Activated CD4-positive, alpha-beta memory T cell treated with anti-CD3 and anti-CD28 coated beads, Interleukin-2, amount 10 ng/mL, durations not matched to agents 7 days and 5 days (primary cell): ENCODE measurements at regions of chr21 and their contacts with region 1.

Region 1: DNA sequence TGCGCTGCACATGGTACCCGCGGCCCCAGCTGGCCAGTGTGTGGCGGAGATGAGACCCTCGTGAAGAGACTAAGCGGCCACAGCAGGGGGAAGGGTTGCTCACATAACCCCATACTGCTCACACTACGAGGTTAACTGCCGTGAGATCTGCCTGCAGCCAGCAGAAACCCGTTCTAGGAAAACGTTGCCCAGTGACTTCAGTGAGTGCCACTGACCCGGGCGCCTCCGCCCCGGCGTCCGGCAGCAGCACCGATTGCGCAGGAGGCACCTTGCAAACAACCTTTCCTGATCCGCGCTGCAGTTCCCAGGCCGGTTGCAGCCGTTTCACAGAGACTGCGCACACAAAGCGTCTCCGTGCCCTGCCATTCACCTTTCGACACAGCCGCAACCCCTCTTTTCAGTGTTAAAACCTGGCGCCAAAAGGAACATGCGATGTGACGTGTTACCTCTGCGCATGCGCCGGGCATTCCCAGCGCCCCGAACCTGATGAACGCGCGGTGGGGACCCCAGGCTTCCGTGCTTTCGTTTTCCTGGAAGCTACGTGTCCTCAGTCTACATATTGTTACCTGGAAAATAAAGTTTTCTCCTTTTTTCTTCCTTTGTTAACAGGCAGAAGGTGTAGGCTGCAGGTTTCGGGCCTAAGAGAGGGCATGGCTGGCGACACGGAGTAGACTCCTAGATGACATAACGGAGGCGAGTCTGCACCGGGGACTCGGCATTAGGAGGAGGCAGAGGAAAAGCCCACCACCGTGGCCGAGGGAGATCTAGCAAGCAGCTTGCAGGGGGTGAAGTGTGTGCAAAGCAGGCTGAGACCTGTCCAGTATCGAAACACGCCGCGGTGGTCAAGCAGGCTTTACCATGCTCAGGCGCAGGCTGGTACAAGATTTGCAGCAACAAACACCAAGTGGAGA is 8.9 kb downstream of the VPS26C start:
- DNase-seq: peak; percentile 88
- H3K4me3 Mint-ChIP-seq: peak overlapping the region; percentile 84
- H3K27ac Mint-ChIP-seq: peak overlapping the region; percentile 96
- H3K4me1 Mint-ChIP-seq: peaks cover 45% of the 10 kb centered on the region
- H3K27me3 Mint-ChIP-seq: no peaks in the 10 kb centered on the region

Region 2: DNA sequence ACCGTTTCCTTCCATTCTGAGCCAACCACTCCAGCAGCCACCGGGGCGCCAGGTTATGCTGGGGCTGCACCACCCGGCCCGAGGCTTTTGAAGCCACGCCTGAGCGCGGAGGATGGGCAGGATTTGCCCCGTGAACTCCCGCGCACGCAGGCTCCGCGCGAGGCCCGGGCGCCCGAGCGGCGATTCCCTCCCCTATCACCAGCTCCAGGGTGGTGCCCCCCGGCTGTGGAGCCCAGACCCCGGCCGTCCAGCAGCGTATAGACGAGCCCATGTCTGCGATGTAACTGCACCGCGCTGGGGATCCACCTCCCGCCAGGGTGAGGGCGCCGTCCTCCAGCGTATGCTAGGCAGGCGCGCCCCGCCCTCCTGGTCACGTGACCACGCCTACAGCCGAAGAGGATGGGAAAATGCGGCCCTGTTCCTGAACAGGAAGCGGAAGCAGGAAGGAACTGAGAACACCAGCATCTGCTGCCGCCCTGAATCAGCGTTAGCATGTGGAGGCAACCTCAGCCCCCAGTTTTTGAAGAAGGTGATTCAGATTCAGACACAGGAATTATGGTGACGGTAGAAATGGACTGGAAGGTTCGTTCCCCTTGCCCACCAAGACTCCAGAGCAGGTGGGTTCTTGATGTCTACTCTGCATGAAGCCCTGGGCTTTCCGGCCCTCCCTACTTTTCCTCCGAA is 37.1 kb before region 1 on chr21:
- CTCF ChIA-PET with region 1: interaction called, 3 read pairs
- POLR2A ChIA-PET with region 1: interaction called, 23 read pairs
- DNase-seq: peak; percentile 92
- H3K4me3 Mint-ChIP-seq: peak overlapping the region; percentile 84
- H3K27ac Mint-ChIP-seq: peak overlapping the region; percentile 88
- H3K4me1 Mint-ChIP-seq: peaks cover 56% of the 10 kb centered on the region
- H3K27me3 Mint-ChIP-seq: no peaks in the 10 kb centered on the region

Region 3: GRCh38 chr21:37244501-37245083 is 13.6 kb before region 1 on chr21:
- CTCF ChIA-PET with region 1: interaction called, 7 read pairs
- POLR2A ChIA-PET with region 1: interaction called, 38 read pairs
- DNase-seq: no peak
- H3K4me3 Mint-ChIP-seq: peak overlapping the region; percentile 61
- H3K27ac Mint-ChIP-seq: peak overlapping the region; percentile 83
- H3K4me1 Mint-ChIP-seq: peaks cover 65% of the 10 kb centered on the region
- H3K27me3 Mint-ChIP-seq: no peaks in the 10 kb centered on the region

Region 4: DNA sequence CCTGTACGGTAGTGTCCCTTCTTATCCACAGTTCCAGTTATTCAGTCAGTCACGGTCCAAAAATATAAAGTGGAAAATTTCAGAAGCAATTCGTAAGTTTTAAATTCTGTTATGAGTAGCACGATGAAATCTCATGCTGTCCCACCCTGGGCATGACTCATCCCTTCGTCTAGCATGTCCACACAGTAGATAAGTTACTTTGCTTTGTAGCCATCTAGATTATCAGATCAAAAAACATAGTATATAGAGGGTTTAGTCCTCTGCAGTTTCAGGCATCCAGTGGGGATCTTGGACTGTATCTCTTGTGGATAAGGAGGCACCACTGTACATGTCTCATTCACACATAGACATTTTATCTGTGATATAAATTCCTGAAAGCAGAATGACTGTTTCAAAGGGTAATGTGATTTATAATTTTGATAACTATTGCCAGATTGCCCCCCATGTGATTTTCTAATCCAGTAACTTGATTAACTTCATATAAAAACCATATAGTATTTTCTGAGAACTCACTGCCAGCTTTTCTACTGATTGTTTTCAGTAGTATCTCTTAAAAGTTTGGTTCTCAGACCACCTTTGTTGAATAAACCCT is 251.7 kb after region 1 on chr21:
- CTCF ChIA-PET with region 1: no interaction called
- POLR2A ChIA-PET with region 1: no interaction called
- DNase-seq: no peak
- H3K4me3 Mint-ChIP-seq: no peak overlapping the region
- H3K27ac Mint-ChIP-seq: no peak overlapping the region
- H3K4me1 Mint-ChIP-seq: peaks cover 2% of the 10 kb centered on the region
- H3K27me3 Mint-ChIP-seq: no peaks in the 10 kb centered on the region